ENCODE measurements at regions of chr17 and their contacts with region 1.

Region 1: DNA sequence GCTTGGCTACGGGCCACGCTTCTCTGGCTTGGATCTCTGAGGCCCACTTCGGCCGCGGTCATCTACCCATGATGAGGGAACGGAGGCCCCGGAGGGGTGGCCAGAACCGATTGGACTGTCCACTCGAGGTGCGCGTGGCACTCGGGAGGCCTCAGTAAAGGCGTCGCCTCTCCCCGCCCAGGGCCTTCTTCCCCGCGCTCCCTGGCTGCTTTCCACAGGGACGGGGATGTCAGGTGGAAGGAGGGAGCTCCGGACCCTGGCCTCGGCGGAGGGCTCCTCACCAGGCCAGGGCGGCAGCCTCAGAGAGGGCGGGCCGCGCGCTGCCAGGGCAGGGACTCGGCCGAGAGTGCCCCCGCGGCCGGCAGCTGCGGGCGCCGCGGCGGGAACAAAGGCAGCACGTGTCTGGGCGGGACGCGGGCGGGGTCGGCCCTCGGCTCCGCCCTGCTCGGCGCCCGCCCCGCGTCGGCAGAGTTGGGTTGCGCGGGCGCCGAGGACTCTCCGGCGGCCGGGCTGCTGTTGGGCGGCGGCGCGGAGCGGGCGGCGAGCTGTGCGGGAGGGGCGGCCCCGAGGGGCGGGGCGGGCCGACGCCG is 587 bp upstream of the CDK5R1 start:
- DNase-seq: peak; percentile 62
- H3K4me3 ChIP-seq: peak overlapping the region; percentile 52 to 57
- H3K27ac ChIP-seq: peak overlapping the region; percentile 59 to 65
- H3K4me1 ChIP-seq: no peaks in the 10 kb centered on the region
- H3K27me3 ChIP-seq: no peaks in the 10 kb centered on the region
- CTCF ChIP-seq: no peak
- POLR2A ChIP-seq: no peak

Region 2: DNA sequence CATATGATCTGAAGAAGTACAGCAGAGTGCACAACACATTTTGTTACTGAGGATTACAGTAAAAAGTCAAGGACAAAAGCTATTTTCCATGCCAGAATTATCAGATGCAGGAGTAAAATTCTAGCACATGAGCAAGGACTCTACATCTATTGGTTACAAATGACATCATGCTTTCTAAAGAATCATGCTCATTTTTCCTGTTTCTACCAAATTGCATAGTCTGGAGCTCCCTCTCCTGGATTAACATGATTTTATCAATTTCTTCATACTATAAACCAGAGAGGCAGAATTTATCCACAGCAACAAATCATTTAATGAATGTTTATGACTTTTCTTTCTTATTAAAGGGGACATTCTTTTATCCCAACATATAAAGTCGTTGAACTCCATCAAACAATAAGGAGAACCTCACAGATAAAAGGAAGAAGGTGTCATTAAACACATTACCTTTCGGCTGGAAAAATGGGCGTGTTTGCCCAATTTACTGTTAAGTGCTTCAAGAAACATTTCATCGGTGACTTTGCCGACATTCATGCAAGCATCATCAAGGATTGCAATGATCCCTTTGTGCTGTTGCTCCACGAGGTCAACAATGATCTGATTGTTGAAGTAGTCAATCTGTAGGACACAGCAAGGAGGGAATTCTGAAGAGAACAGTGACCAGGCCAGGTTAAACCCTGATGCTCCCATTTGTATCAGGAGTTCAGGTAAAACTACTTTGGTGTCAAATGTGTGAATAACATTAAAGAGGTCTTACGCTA is 269.0 kb after region 1 on chr17:
- intact Hi-C with region 1: loop called (anchors 5 kb)
- DNase-seq: no peak
- H3K4me3 ChIP-seq: no peak overlapping the region
- H3K27ac ChIP-seq: no peak overlapping the region
- H3K4me1 ChIP-seq: no peaks in the 10 kb centered on the region
- H3K27me3 ChIP-seq: no peaks in the 10 kb centered on the region
- CTCF ChIP-seq: peak in 2 of 4 experiments; percentile 71 to 80
- POLR2A ChIP-seq: no peak

Region 3: DNA sequence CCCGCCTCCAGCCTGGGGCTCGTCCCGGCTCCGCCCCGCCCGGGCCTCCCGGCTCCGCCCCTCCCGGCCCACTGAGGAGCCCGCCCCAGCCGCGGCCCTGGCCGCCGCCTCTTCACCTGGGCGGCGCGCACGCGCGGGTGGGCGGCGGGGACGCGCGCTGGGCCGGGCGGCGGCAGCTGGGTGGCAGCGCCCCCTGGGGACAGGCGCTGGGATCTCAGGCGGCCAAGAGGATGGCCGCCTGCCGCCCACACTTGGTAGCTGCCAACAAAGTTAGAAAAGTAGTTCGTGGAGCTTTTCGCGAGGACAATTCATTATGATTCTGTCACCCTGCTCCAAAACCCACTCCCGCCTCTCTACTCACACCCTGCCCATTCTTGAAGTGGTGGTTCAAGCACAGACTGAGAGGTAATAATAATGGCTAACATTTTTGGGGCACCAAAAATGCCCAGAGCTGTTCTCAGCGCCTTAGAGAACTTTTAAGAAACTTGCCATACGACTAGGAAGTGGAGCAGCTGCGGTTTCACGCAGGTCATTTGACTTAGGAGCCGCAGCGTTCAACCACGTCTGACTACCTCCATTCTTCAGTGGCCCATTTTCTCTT is 391.1 kb after region 1 on chr17:
- intact Hi-C with region 1: loop called (anchors 5 kb)
- DNase-seq: peak; percentile 90
- H3K4me3 ChIP-seq: peak overlapping the region; percentile 87 to 97
- H3K27ac ChIP-seq: peak overlapping the region; percentile 95 to 97
- H3K4me1 ChIP-seq: no peaks in the 10 kb centered on the region
- H3K27me3 ChIP-seq: no peaks in the 10 kb centered on the region
- CTCF ChIP-seq: peak; percentile 61 to 99 (median 90)
- POLR2A ChIP-seq: no peak

Measured in prostate gland (tissue), 2 donors.